Calu3 (cell line): ENCODE measurements at regions of chr1 and their contacts with region 1.

Region 1: GRCh38 chr1:237562242-237562823 is 328.4 kb downstream of the ZP4 start:
- DNase-seq: peak; percentile 18
- H3K4me3 Mint-ChIP-seq: no peak overlapping the region
- H3K27ac Mint-ChIP-seq: no peak overlapping the region
- H3K4me1 Mint-ChIP-seq: no peaks in the 10 kb centered on the region
- H3K27me3 Mint-ChIP-seq: no peaks in the 10 kb centered on the region
- CTCF ChIP-seq: peak; percentile 76

Region 2: GRCh38 chr1:236759252-236759859 is 803.0 kb before region 1 on chr1:
- CTCF ChIA-PET with region 1: interaction called, 10 read pairs
- intact Hi-C with region 1: loop called (anchors 1 kb)
- DNase-seq: peak; percentile 12
- H3K4me3 Mint-ChIP-seq: no peak overlapping the region
- H3K27ac Mint-ChIP-seq: no peak overlapping the region
- H3K4me1 Mint-ChIP-seq: no peaks in the 10 kb centered on the region
- H3K27me3 Mint-ChIP-seq: no peaks in the 10 kb centered on the region
- CTCF ChIP-seq: peak; percentile 60

Region 3: GRCh38 chr1:236888903-236889302 is 673.4 kb before region 1 on chr1:
- CTCF ChIA-PET with region 1: no interaction called
- intact Hi-C with region 1: loop called (anchors 10 kb)
- DNase-seq: no peak
- H3K4me3 Mint-ChIP-seq: no peak overlapping the region
- H3K27ac Mint-ChIP-seq: no peak overlapping the region
- H3K4me1 Mint-ChIP-seq: no peaks in the 10 kb centered on the region
- H3K27me3 Mint-ChIP-seq: no peaks in the 10 kb centered on the region
- CTCF ChIP-seq: no peak

Region 4: DNA sequence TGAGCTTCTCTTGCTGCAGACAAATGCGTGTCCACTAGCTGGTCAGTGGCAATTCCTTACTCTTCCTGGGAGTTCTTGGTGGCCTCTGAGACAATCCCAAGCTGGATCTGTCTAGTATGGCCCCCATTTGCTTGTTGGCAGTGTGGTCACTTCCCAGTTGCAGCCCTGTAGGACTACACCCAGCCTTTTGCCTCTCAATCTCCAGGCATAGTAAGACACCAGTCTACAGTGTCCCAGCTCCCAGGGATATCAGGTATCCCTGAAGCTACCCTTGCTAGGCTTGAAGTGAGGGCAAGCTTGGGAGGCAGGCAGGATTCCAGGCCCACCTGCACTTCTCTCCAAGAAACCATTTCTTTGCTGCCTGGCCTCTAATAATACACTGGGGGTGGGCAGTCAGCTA is 203.8 kb before region 1 on chr1:
- CTCF ChIA-PET with region 1: no interaction called
- intact Hi-C with region 1: no loop called
- DNase-seq: no peak
- H3K4me3 Mint-ChIP-seq: no peak overlapping the region
- H3K27ac Mint-ChIP-seq: no peak overlapping the region
- H3K4me1 Mint-ChIP-seq: no peaks in the 10 kb centered on the region
- H3K27me3 Mint-ChIP-seq: no peaks in the 10 kb centered on the region
- CTCF ChIP-seq: no peak

Region 5: GRCh38 chr1:237386362-237387143 is 175.8 kb before region 1 on chr1:
- CTCF ChIA-PET with region 1: interaction called, 8 read pairs
- intact Hi-C with region 1: loop called (anchors 5 kb)
- DNase-seq: no peak
- H3K4me3 Mint-ChIP-seq: no peak overlapping the region
- H3K27ac Mint-ChIP-seq: no peak overlapping the region
- H3K4me1 Mint-ChIP-seq: no peaks in the 10 kb centered on the region
- H3K27me3 Mint-ChIP-seq: no peaks in the 10 kb centered on the region
- CTCF ChIP-seq: peak; percentile 62

Region 6: DNA sequence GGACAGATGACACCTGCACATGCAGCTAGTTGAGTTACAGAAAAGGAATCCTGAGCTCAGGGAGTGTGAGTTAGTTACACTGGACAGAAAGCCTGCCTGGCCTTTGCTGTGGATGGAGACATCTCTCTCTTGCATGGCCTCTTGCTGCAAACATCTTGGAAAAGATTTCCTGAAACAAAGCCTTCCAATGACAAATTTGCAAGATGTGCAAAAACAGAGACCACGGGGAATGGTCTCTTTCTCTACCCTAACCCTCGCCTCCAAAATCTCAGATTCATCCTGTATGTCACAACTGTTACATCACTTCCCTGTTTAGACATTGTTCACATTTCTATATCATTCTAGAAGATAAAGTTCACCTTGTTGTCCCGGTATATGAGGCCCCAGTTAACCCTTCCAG is 104.8 kb before region 1 on chr1:
- CTCF ChIA-PET with region 1: no interaction called
- intact Hi-C with region 1: no loop called
- DNase-seq: no peak
- H3K4me3 Mint-ChIP-seq: no peak overlapping the region
- H3K27ac Mint-ChIP-seq: no peak overlapping the region
- H3K4me1 Mint-ChIP-seq: no peaks in the 10 kb centered on the region
- H3K27me3 Mint-ChIP-seq: no peaks in the 10 kb centered on the region
- CTCF ChIP-seq: no peak

Region 7: DNA sequence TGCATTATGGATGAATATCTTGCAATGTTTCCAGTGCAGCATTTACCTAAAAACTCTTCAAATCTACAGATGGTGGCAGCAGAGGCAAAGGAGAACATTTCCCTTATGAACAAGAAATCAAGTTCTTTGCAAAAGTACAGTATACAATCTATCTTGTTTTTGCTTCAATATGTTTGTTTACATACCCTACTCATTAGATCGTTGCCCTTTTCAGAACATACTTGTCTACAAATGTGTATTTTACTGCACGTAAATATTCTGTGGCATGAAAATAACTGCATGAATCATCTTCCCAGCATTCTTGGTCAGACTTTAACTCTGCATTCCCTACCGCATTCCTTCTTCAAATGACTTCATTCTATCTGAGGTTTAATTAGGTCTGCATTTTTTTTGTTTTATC is 115.6 kb after region 1 on chr1:
- CTCF ChIA-PET with region 1: interaction called, 4 read pairs
- intact Hi-C with region 1: loop called (anchors 5 kb)
- DNase-seq: peak; percentile 8
- H3K4me3 Mint-ChIP-seq: no peak overlapping the region
- H3K27ac Mint-ChIP-seq: no peak overlapping the region
- H3K4me1 Mint-ChIP-seq: peaks cover 32% of the 10 kb centered on the region
- H3K27me3 Mint-ChIP-seq: no peaks in the 10 kb centered on the region
- CTCF ChIP-seq: no peak